ENCODE measurements at regions of chr11 and their contacts with region 1.

Region 1: DNA sequence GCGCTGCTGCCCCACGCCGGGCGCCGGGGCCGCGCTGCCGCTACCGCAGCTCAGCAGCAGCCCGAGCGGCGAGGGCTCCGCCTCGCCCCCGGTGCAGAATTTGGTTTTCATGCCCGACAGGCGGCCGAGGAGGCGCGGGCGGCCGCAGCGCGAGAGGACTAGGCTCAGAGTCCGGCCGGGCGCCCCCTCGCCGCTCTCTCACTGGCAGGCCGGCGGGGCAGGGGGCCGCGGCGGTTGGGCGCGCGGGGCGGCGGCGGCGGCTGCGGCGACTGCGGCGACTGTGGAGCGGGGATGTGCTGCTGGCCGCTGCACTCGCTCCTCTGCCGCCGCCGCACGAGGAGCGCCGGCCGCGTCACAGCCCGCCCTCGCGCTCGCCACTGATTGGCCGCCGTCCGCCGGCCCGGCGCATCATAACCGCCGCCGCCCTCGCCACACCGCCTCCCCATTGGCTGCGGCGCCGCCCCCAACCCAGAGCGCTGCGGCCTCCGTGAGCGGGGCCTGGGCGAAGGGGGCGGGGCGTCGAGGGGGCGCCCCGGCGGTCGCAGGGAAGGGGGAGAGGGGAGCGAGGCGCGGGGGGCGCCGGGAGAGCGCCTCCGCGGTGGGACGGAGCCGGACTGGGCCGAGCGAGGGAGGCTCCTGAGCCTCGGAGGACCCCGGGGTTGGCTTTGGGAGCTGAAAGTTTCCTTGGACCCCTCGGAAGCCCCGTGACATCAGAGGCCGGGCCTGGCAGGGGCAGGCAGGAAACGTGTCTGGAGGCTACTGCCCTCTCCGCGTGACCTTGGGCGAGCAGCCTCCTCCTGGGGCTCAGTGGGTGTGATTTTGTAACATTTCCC is at the start of gene CHKA:
- DNase-seq: peak; percentile 76 to 98 (median 95)

Region 2: GRCh38 chr11:68030318-68031138 is 90.8 kb before region 1 on chr11 and contains the start of gene NDUFS8:
- intact Hi-C with region 1: loop called (anchors 2 kb)
- DNase-seq: peak; percentile 94 to 99 (median 98)

Region 3: GRCh38 chr11:68436985-68437926 is 316.0 kb after region 1 on chr11:
- intact Hi-C with region 1: no loop called
- DNase-seq: no peak

Measured in head of caudate nucleus (tissue), 42 donors.